ENCODE measurements at regions of chr18 and their contacts with region 1.

Region 1: DNA sequence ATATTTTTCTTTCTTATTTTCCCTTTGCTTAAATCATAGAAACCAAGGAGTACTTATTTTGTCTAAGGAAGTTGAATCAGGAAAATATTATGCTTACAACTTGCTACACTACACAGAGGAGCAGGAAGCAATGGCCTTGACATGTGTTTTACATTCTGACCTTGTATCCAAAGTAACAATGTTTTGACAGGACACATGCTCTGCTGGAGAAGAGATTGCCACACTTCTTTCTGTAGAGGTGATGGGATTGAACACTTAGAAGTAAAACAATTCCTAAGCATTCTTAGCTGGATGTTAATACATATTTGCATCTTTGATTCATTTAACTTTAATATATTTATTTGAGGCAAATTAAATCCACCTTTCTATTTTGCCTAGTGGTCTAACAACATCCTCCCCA is 929.1 kb downstream of the DSC3 start:
- DNase-seq: no peak
- ATAC-seq: no peak
- H3K4me3 ChIP-seq: no peak overlapping the region
- H3K27ac ChIP-seq: no peak overlapping the region
- H3K4me1 ChIP-seq: no peaks in the 10 kb centered on the region
- H3K27me3 ChIP-seq: no peaks in the 10 kb centered on the region
- CTCF ChIP-seq: no peak
- POLR2A ChIP-seq: no peak

Region 2: GRCh38 chr18:30034818-30035217 is 78.6 kb before region 1 on chr18:
- intact Hi-C with region 1: no loop called
- DNase-seq: no peak
- ATAC-seq: no peak
- H3K4me3 ChIP-seq: no peak overlapping the region
- H3K27ac ChIP-seq: no peak overlapping the region
- H3K4me1 ChIP-seq: no peaks in the 10 kb centered on the region
- H3K27me3 ChIP-seq: no peaks in the 10 kb centered on the region
- CTCF ChIP-seq: no peak
- POLR2A ChIP-seq: no peak

Region 3: DNA sequence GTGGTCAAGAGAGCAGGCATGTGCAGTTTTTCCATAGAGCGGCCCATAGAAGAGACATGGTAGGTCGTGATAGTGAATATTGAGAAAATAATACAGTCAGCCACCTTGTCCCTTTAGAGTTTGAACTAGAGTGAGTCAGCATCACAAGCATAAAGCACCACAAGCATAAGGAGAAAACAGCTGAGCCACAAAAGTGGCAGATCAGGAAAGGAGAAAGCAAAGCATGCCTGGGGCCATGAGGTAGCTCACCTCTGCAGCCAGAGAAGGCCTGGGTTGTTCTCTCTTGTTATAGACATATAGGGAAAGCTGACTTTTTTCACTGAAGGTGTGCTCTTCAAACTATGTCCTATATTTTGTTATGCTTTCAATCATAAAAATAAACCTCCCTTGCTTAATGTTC is 50.1 kb after region 1 on chr18:
- intact Hi-C with region 1: loop called in 1 of 10 experiments (anchors 5 kb)
- DNase-seq: no peak
- ATAC-seq: no peak
- H3K4me3 ChIP-seq: no peak overlapping the region
- H3K27ac ChIP-seq: no peak overlapping the region
- H3K4me1 ChIP-seq: no peaks in the 10 kb centered on the region
- H3K27me3 ChIP-seq: no peaks in the 10 kb centered on the region
- CTCF ChIP-seq: no peak
- POLR2A ChIP-seq: no peak

Measured in heart left ventricle (tissue), 16 donors.